ENCODE measurements at regions of chr11 and their contacts with region 1.

Region 1: DNA sequence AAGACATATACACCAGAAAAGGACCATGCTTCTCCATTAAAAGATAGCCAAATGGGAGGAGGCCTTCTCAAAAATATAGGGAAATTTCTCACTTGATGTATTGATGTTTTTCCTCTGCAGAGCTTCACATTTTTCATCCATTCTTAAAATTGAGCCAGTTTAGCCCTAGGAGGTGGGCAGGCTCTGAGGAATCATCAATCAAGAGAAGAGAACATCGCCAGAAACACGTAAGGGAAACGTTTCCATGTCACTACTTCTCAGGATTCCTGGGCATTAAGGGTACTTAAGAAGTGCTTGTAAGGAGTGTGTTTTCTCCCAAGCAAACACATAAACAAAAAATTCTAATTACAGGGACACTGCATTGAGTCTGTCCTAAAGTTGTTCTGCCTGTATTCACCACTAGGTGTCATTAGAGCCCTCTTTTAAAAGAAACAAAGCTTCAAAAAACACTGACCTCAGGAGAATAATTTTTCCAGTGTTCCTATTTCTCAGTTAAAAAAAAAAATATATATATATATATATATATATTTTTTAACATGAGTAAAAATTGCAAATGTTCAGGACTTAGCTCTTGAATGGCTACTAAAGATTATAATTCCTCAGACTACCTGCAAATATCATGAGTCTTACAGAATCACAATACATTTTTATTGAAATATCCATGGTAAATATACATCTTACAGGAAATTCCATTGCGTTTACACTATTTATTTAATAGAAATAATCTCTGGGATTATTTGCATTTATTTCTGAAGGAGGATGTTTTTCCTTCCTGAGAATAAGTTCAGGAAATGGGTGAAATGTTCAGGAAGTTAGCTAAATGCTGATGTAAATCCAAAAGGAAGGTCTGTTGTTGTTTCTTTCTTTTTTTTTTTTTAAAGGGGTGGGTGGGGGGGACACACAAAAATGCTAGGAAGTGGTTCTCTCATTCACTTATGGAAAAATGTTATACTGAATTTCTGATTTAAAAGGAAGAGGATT is 16.0 kb downstream of the FZD4 start:
- DNase-seq: no peak
- H3K4me3 ChIP-seq: no peak overlapping the region
- CTCF ChIP-seq: peak; percentile 58

Region 2: DNA sequence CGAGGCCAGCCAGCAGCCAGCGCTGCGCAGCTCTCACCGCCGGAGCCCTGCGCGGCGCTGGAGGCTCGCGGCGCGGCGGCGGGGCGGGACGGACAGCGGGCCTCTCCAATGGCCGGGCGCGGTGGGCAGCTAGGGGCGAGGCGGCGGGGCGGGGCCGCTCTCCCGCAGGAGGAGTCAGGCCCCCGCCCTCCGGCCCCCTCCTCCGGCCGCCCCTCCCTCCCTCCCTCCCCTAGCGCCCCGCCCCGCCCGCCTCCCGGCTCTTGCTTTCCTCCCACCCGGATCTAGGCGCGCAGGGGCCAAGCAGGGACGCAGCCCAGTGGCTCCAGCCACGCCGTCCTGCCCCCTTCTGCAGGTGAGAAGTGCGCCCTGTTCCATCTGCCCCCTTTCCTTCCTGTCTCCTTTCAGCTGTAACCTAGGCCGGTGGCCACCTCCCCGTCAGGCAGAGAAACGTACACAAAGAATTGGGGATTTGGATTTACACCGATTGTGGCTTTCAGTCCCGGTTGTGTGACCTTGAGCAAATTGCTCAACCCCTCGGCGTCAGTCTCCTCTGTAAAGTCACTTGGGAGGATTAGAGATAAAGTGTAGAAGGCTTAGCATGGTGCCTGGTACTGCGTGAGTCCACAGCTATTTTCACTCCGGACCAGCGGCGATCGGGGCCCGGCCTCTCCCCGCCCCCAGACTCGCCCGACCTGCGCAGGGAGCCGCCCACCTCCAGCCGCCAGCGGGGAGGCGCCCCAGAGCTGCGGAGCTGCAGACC is 16.4 kb after region 1 on chr11 and contains the start of gene FZD4:
- CTCF ChIA-PET with region 1: interaction called, 52 read pairs
- POLR2A ChIA-PET with region 1: interaction called, 3 read pairs
- DNase-seq: no peak
- H3K4me3 ChIP-seq: peak within 1 kb of the TSS; percentile 92
- CTCF ChIP-seq: peak; percentile 30

Region 3: GRCh38 chr11:86990515-86990914 is 51.3 kb after region 1 on chr11:
- CTCF ChIA-PET with region 1: interaction called, 17 read pairs
- POLR2A ChIA-PET with region 1: no interaction called
- DNase-seq: no peak
- H3K4me3 ChIP-seq: no peak overlapping the region
- CTCF ChIP-seq: no peak

Region 4: GRCh38 chr11:87281496-87281895 is 342.3 kb after region 1 on chr11:
- CTCF ChIA-PET with region 1: interaction called, 241 read pairs
- POLR2A ChIA-PET with region 1: no interaction called
- DNase-seq: no peak
- H3K4me3 ChIP-seq: no peak overlapping the region
- CTCF ChIP-seq: no peak

Measured in AG04449 (cell line).